ENCODE measurements at regions of chr12 and their contacts with region 1.

Region 1: DNA sequence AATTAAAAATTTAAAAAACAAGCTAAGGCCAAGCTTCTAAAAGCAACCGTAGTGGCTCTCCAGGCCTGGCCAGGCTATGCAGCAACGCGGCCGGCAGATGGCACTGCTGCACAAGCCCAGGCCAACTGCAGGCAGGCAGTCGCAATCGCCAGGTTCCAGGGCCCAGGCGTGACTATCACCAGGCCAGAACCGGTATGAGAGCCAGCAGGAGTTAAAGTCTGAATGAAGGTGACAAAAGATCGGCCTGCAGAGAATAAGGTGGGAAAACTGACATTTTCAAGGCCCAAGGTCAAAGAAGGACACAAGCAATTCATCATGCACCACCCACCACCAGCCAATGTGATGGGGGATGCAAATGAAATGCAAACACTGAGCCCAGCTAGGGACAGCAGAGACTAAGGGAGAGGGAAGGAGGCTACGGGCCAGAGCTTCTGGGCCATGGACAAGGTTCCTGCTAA is 43.6 kb upstream of the ANO2 start:
- DNase-seq: peak; percentile 69
- H3K4me3 ChIP-seq: no peak overlapping the region
- H3K27ac ChIP-seq: no peak overlapping the region
- H3K4me1 ChIP-seq: no peaks in the 10 kb centered on the region
- H3K27me3 ChIP-seq: no peaks in the 10 kb centered on the region
- CTCF ChIP-seq: peak; percentile 94

Region 2: GRCh38 chr12:6039894-6040568 is 51.3 kb after region 1 on chr12:
- intact Hi-C with region 1: loop called (anchors 2 kb)
- DNase-seq: peak; percentile 41
- H3K4me3 ChIP-seq: no peak overlapping the region
- H3K27ac ChIP-seq: no peak overlapping the region
- H3K4me1 ChIP-seq: no peaks in the 10 kb centered on the region
- H3K27me3 ChIP-seq: no peaks in the 10 kb centered on the region
- CTCF ChIP-seq: peak; percentile 79

Measured in colonic mucosa (tissue), 4 donors.